Mucosa of descending colon (tissue), 3 donors: ENCODE measurements at regions of chr1 and their contacts with region 1.

Region 1: GRCh38 chr1:18820791-18821641 is 38.4 kb downstream of the TAS1R2 start:
- DNase-seq: peak in 2 of 3 donors; percentile 82 to 85
- ATAC-seq: peak; percentile 87
- H3K4me3 ChIP-seq: no peak overlapping the region
- H3K4me1 ChIP-seq: no peaks in the 10 kb centered on the region
- CTCF ChIP-seq: peak; percentile 67

Region 2: DNA sequence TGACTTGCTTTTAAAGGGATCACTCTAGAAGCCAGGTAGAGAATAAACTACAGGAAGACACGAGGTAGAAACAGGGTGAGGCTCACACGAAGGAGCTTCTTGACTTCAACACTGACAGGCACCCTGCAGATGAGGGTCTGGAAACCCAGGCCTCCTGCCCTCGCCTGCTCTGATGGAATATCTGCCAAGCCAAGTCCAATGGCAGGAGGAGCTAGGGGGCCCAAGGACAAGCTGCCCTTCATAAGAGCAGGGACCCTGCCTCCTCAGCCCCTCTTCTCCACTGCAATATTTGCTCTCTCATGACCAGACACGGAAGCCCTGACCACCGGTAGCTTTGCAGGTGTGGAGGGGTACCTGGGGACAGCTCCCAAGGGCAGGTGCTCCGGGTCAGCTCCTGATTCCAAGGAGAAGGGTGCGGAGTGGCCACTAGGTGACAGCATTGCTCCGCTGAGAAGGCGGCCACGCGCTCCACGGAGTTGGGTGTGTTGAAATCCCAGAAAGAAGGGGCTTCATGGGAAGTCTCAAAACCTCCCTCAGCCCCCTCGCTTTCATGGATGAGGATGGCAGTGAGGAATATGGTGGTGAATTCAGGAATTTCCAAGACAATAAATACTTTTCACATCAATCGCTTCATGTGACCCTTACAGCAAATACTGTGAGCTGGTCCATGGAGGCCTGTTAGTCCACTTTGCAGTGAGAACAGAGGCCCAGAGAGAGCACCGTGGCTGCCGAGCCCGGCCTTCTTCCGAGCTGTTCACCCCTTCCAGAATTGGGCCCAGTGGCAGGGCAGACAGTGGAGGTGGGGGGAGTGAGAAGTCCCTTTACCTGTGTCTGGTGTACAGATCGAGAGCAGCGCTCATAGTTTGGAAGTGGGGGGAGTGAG is 223.6 kb before region 1 on chr1:
- intact Hi-C with region 1: loop called (anchors 5 kb)
- DNase-seq: peak in 2 of 3 donors; percentile 64 to 69
- ATAC-seq: peak; percentile 75
- H3K4me3 ChIP-seq: no peak overlapping the region
- H3K4me1 ChIP-seq: no peaks in the 10 kb centered on the region
- CTCF ChIP-seq: peak; percentile 73

Region 3: GRCh38 chr1:18972531-18972930 is 151.5 kb after region 1 on chr1:
- intact Hi-C with region 1: no loop called
- DNase-seq: peak in 1 of 3 donors; percentile 39
- ATAC-seq: no peak
- H3K4me3 ChIP-seq: no peak overlapping the region
- H3K4me1 ChIP-seq: no peaks in the 10 kb centered on the region
- CTCF ChIP-seq: no peak